Activated T-helper 1 cell treated with anti-CD3 and anti-CD28 coated beads, Interleukin-12 subunit alpha, Interleukin-12 subunit beta, Interleukin-2, Interleukin-4 antibody, amounts not matched to agents 30 ng/mL and 10 ng/mL and 1 ng/mL, durations not matched to agents 14 hours and 24 hours and 36 hours (primary cell): ENCODE measurements at regions of chr1 and their contacts with region 1.

Region 1: GRCh38 chr1:111275079-111275478 is 15.6 kb upstream of the CHIA start:
- DNase-seq: peak; percentile 8
- H3K4me3 Mint-ChIP-seq: no peak overlapping the region
- H3K27ac Mint-ChIP-seq: peak overlapping the region; percentile 37
- H3K4me1 Mint-ChIP-seq: peaks cover 26% of the 10 kb centered on the region
- H3K27me3 Mint-ChIP-seq: peaks cover 20% of the 10 kb centered on the region

Region 2: DNA sequence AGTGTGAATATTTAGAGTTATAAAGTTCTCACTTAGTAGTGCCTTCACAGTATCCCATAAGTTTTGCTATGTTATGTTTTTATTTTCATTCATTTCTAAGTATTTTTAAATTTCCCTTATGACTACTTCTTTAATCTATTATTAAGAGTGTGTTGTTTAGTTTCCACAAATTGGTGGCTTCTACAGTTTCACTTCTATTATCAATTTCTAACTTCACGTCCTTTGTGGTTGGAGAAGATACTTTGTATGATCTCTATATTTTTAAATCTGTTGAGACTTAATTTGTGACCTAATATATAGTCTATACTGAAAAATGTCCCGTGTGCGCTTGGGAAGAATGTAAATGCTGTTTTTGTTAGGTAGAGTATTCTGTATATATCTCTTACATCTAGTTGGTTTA is 27.3 kb after region 1 on chr1:
- intact Hi-C with region 1: no loop called
- DNase-seq: no peak
- H3K4me3 Mint-ChIP-seq: no peak overlapping the region
- H3K27ac Mint-ChIP-seq: no peak overlapping the region
- H3K4me1 Mint-ChIP-seq: no peaks in the 10 kb centered on the region
- H3K27me3 Mint-ChIP-seq: peaks cover 6% of the 10 kb centered on the region

Region 3: DNA sequence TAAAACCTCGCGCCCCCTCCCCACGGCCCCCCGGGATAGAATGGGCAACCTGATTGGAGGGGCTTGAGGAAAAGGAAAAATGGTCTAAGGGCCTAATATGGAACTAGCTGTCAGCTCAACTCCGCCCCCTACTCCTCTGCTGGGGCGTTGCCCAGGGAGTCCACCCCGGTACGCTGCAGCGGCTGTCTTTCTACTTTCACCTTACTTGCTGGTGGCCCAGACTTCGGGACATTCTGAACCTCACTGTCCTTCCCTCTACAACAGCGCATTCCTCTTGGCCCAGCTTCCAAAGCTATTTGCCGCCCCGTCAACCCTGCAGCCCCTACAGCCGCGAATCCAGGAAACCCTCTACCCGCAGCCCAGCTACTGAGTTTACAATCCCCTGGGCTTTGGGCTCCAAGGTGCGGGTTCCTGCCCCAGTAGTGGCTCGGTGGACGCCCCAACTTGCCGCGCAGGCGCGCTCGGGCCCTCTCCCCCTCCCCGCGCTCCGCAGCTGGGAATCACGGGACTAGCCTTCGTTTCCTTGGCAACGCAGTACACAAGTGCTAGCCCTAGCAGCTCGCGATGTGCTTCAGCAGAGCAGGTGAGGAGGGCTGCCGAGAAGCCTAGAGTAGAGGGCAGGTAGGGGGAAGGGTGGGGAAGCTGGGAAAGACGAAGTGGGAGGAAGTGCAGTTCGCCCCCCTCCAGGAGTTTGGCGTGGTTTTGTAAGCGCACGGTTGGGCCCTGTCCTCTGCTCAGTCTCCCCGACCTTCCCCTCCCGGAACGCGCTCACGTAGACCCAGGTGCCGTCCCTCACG is 71.2 kb after region 1 on chr1:
- intact Hi-C with region 1: loop called (anchors 5 kb)
- DNase-seq: peak; percentile 78
- H3K4me3 Mint-ChIP-seq: peak overlapping the region; percentile 85
- H3K27ac Mint-ChIP-seq: peak overlapping the region; percentile 40
- H3K4me1 Mint-ChIP-seq: peaks cover 23% of the 10 kb centered on the region
- H3K27me3 Mint-ChIP-seq: peaks cover 6% of the 10 kb centered on the region

Region 4: GRCh38 chr1:111392460-111392945 is 117.4 kb after region 1 on chr1:
- intact Hi-C with region 1: no loop called
- DNase-seq: no peak
- H3K4me3 Mint-ChIP-seq: no peak overlapping the region
- H3K27ac Mint-ChIP-seq: no peak overlapping the region
- H3K4me1 Mint-ChIP-seq: no peaks in the 10 kb centered on the region
- H3K27me3 Mint-ChIP-seq: peaks cover 31% of the 10 kb centered on the region